CD4-positive, alpha-beta T cell (primary cell): ENCODE measurements at regions of chrX and their contacts with region 1.

Region 1: DNA sequence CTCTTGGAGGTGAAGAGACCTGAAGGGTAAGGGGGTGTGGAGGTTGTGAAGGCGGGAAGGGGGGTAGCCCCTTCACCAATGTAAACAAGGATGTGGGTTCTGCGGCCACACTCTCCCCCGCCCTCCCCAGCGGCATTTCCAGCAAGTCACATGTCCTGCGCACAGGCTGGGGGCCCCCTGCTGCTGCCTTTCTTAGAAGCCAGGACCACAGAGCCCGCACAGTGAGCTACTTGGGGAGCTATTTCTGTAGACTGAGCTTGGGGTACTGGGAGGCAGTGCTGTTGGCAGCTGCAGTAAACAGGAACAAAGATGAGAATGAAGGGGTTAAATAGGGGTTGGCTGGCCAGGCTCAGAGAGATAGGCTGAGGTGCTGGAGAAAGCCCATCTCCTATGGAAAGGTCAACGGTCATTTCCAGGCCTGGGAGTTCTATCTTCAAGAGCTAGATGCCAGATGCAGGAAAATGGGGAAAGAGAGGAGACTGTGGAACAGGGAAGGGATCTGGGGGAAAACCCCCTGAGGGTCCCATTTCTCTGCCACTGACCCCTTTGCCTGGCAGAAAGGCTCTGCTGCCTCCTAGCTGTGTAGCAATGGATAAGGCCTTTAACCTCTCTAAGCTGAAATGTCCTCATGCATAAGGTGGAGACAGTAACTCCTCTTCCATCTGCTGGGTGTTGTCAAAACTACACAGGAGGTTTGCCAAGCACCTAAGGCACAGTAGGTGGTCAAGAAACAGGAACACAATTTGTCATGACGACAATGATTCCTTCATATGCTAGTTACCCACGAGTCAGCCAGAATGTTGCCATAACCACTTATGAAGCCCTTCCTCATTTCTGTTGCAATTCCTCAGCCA is 18.5 kb upstream of the PIM2 start:
- DNase-seq: peak; percentile 77 to 94 (median 88)
- ATAC-seq: peak; percentile 68
- H3K4me3 ChIP-seq: peak overlapping the region; percentile 49
- H3K4me3 Mint-ChIP-seq: peak overlapping the region; percentile 82
- H3K27ac ChIP-seq: peak overlapping the region; percentile 92 to 93
- H3K27ac Mint-ChIP-seq: peak overlapping the region; percentile 98
- H3K4me1 ChIP-seq: peaks cover 85% of the 10 kb centered on the region
- H3K4me1 Mint-ChIP-seq: peaks cover 90% of the 10 kb centered on the region
- H3K27me3 ChIP-seq: no peaks in the 10 kb centered on the region
- H3K27me3 Mint-ChIP-seq: no peaks in the 10 kb centered on the region
- CTCF ChIP-seq: peak; percentile 40

Region 2: DNA sequence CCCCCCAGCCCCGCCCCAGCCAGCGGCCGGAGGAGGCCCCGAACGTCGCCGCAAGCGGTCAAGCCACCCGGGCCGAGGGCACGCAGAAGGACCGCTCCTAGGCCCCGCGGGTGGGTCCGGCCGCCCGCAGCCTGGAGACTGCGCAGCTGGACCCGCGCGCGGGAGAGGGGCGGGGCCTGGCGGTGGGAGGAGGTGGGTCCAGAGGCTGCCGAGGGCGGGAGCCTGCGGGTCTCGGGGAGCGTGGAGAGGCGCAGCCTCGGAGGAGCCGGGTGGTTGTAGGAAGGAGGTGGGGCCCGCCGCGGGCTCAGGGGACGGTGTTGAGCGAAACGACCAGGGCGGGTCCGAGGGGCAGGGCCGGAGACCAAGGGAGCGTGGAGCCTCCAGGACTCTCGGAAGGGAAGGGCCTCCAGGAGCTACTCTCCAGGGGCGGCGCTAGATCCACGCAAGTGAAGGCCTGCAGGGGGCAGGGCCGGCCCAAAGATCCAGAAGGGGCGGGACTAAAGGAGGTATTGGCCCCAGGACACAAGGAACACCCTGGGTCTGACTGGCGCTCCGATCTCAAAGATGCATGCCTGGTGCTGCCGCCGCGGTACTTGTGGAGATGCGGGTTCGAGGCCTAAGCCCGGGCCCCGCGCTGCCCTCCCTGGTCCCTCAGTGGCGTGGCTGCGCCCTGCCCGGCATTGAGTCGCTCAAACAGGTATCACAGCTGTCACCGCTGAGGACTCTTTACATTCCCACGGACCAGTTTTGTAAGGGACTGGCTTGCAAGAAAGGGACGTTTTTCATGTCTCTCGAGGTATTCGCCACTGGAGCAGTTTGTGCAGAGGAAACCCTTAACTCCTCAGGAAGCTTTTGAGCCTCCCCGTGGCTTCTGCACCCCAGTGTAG is 45.6 kb before region 1 on chrX:
- CTCF ChIA-PET with region 1: interaction called, 13 read pairs
- POLR2A ChIA-PET with region 1: interaction called, 33 read pairs
- intact Hi-C with region 1: loop called in 1 of 2 experiments (anchors 2 kb)
- DNase-seq: peak; percentile 52 to 90 (median 72)
- ATAC-seq: peak; percentile 88
- H3K4me3 ChIP-seq: peak overlapping the region; percentile 60
- H3K4me3 Mint-ChIP-seq: peak overlapping the region; percentile 86
- H3K27ac ChIP-seq: peak overlapping the region in 1 of 2 donors; percentile 29
- H3K27ac Mint-ChIP-seq: peak overlapping the region; percentile 71
- H3K4me1 ChIP-seq: peaks cover 27% of the 10 kb centered on the region
- H3K4me1 Mint-ChIP-seq: peaks cover 26% of the 10 kb centered on the region
- H3K27me3 ChIP-seq: no peaks in the 10 kb centered on the region
- H3K27me3 Mint-ChIP-seq: no peaks in the 10 kb centered on the region
- CTCF ChIP-seq: peak; percentile 40

Region 3: DNA sequence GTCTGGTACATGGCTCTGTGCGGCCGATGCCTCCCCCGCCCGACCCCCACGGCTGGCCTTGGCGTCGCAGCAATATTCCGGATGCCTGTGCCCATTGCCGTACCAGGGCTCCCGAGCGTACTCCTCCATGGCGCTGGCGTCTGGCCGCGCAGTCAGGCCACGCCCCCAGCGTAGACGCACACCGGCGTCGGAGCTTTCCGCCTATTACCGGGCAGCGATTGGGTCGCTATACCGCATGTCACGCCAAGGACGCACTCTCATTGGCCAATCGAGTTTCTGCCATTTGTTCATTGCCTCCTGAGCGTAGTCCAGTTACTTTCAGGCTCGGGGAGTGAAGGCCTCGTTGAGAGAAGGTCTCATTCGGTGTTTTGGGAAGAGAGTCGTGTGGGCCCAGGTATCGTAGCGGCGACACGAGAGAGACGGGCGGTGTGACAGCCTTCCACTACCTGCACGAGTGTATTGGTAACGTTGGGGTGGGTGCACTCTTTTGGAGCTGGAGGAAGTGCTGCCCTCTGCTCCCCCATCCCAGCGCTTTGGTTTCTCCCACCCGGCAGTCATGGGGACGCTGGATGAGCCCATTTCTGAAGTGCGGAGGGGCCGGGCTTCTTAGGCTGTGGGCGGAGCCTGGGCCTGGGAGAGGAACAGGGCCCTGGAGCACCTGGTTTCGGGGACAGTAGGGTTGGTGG is 39.5 kb before region 1 on chrX and contains the starts of genes PQBP1 and TIMM17B:
- CTCF ChIA-PET with region 1: interaction called, 13 read pairs
- POLR2A ChIA-PET with region 1: interaction called, 49 read pairs
- intact Hi-C with region 1: no loop called
- DNase-seq: peak; percentile 73 to 96 (median 84)
- ATAC-seq: peak; percentile 84
- H3K4me3 ChIP-seq: peak within 1 kb of the TSS; percentile 91
- H3K4me3 Mint-ChIP-seq: peak within 1 kb of the TSS; percentile 91
- H3K27ac ChIP-seq: peak within 1 kb of the TSS; percentile 93 to 98
- H3K27ac Mint-ChIP-seq: peak within 1 kb of the TSS; percentile 90
- H3K4me1 ChIP-seq: peaks cover 33% of the 10 kb centered on the region
- H3K4me1 Mint-ChIP-seq: peaks cover 27% of the 10 kb centered on the region
- H3K27me3 ChIP-seq: no peaks in the 10 kb centered on the region
- H3K27me3 Mint-ChIP-seq: no peaks in the 10 kb centered on the region
- CTCF ChIP-seq: no peak
- total RNA-seq, gene PQBP1: 73.0 to 76.6 TPM
- total RNA-seq, gene TIMM17B: 40.0 to 40.3 TPM